ENCODE measurements at regions of chr5 and their contacts with region 1.

Region 1: DNA sequence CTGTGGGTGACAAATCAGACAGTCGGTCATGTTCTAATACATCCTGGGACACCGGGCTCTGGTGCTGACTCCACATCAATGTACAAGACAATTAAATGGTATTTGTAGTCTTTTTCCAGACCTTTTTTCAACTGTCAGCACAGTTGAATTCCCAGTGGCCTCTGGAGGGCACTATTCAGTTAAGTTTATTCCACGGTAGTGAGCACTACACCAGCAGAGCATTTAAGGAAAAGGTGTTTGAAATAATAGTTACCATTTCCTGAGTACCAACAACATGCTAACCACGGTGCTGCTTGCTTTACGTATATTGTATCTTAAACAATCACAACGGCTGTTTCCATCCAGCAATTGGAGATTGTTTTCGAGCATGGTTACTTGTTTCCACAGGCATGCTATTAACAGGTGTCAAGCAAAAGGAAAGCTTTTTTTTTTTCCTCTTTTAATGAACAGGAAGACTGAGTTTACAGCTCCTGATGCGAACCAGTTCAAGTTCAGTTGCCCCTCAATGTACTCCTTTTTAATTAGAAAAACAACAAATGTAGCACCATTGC is 186.7 kb downstream of the PDZD2 start:
- DNase-seq: peak; percentile 36 to 72 (median 46)
- H3K4me3 ChIP-seq: no peak overlapping the region
- H3K27ac ChIP-seq: no peak overlapping the region
- H3K4me1 ChIP-seq: no peaks in the 10 kb centered on the region
- H3K27me3 ChIP-seq: no peaks in the 10 kb centered on the region
- CTCF ChIP-seq: peak; percentile 39 to 71 (median 70)
- EP300 ChIP-seq: no peak
- POLR2A ChIP-seq: no peak

Region 2: GRCh38 chr5:32076699-32077695 is 251.4 kb after region 1 on chr5:
- intact Hi-C with region 1: loop called in 2 of 4 experiments (anchors 5 kb)
- DNase-seq: peak in 2 of 5 donors; percentile 57 to 71
- H3K4me3 ChIP-seq: no peak overlapping the region
- H3K27ac ChIP-seq: no peak overlapping the region
- H3K4me1 ChIP-seq: peaks cover 2% of the 10 kb centered on the region
- H3K27me3 ChIP-seq: no peaks in the 10 kb centered on the region
- CTCF ChIP-seq: peak; percentile 40 to 78 (median 72)
- EP300 ChIP-seq: no peak
- POLR2A ChIP-seq: no peak

Region 3: DNA sequence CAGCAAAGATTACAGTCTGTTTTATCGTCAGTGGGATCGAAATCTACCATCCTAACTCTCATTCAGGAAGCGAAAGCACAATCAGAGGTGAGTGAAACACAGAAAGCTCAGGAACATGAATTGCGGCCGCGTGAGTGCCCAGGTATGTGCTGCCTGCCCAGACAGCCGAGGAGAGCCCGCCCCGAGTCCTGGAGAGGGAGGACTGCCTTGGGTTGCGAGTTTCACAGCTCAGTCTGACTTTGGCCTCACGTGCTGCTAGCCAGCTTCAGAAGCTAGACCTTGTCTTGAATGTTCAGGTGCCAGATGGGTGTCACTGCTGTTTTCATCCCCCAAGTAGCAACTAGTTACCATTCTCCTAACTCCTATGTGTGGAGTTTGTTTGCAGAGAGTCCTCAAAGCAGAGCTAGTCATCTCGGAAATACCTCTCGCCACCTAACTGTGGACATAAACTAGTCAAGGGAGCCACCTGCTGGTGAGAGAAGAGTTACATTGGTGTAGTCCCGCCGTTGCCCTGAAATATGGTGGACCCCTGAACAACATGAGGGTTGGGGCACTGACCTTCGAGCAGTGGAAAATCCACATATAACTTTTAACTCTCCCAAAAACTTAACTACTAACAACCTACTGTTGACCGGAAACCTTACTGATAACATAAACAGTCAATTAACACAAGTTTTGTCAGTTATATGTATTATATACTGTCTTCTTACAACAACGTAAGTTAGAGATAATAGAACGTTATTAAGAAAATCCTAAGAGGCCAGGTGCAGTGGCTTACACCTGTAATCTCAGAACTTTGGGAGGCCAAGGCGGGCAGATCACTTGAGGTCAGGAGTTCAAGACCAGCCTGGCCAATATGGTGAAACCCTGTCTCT is 267.6 kb after region 1 on chr5:
- intact Hi-C with region 1: loop called (anchors 5 to 10 kb)
- DNase-seq: peak; percentile 59 to 83 (median 73)
- H3K4me3 ChIP-seq: no peak overlapping the region
- H3K27ac ChIP-seq: no peak overlapping the region
- H3K4me1 ChIP-seq: peaks cover 22% of the 10 kb centered on the region
- H3K27me3 ChIP-seq: no peaks in the 10 kb centered on the region
- CTCF ChIP-seq: peak; percentile 32 to 90 (median 87)
- EP300 ChIP-seq: no peak
- POLR2A ChIP-seq: no peak